ENCODE measurements at regions of chr3 and their contacts with region 1.

Region 1: DNA sequence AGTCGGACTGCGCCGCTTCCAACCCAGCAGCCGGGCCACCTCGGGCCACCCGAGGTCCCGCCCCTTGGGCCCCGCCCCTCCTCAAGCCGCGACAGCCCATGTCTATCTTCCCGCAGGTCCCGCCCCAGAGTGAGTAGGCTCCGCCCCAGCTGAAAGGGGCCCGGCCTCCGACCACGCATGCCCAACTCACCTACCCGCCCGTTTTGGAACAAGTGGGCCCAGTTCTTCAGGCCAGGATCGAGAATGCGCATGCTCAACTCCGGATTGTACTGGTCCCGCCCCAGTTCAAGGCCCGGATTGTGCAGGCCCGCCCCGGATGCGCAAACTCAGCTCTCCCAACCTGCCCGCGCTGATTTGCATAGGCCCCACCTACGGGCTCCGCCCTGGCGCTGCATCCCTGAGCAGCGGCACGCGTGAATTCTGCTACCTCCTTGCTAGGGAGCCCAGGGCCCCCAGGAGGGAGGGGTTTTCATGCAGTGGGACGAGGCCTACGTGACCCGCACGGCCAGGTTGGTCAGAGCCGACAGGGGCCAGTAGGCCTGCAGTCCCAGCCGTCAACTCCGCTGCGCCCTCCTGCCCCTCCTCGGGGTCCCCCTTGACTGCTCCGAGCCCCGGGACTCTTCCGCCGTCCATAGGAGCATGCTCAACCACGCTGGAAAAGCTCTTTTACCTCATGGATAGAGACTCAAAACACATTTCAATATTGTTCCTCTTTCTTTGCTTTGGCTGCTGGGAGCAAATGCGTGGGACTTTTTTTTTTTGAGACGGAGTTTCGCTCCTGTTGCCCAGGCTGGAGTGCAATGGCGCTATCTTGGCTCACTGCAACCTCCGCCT is at the start of gene PFKFB4:
- DNase-seq: peak; percentile 100
- H3K4me3 Mint-ChIP-seq: peak within 1 kb of the TSS; percentile 91
- H3K27ac Mint-ChIP-seq: peak within 1 kb of the TSS; percentile 90
- H3K4me1 Mint-ChIP-seq: peaks cover 52% of the 10 kb centered on the region
- H3K27me3 Mint-ChIP-seq: no peaks in the 10 kb centered on the region
- total RNA-seq, gene PFKFB4: 11.7 and 15.5 TPM in 2 replicates

Region 2: DNA sequence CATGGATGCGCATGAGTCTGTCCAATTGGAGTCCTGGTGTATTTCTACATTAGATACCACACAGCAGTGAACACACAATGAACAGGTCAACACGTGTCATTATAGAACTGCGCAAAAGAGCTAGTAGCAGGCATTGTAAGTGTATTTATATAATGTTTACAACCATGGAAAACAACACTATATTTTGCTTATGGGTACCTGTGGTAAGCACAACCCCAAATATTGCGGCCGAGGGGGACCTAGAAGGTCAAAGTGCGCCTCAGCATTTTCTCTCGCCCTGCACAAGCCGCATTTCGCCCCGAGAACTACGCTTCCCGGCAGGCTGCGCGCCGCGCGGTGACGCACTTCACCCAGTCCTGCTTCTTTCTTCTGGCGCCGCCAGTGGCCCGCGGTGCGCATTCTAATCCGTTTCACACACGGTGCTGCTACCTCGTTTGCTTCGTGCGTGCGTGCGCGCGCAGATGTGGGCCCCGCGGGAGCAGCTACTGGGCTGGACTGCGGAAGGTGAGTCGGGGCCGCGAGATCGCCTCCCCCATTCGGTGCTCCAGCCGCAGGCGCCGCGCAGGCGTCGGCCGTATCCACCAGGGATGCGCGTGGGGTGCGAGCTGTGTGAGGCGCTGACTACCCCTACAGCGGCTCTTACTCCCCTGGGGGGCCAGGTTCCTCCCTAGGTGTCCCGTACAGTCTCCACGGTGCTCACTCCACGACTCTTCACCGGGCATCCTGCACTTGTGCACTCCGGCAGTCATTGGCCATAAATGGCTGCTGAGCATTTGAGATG is 316.1 kb before region 1 on chr3 and contains the start of gene ZNF589:
- intact Hi-C with region 1: loop called (anchors 1 kb)
- DNase-seq: peak; percentile 93
- H3K4me3 Mint-ChIP-seq: peak within 1 kb of the TSS; percentile 91
- H3K27ac Mint-ChIP-seq: peak within 1 kb of the TSS; percentile 95
- H3K4me1 Mint-ChIP-seq: peaks cover 19% of the 10 kb centered on the region
- H3K27me3 Mint-ChIP-seq: no peaks in the 10 kb centered on the region
- total RNA-seq, gene ZNF589: 33.0 and 34.2 TPM in 2 replicates

Region 3: GRCh38 chr3:48439820-48440589 is 117.0 kb before region 1 on chr3 and contains the starts of genes CCDC51 and TMA7:
- intact Hi-C with region 1: loop called (anchors 1 kb)
- DNase-seq: peak; percentile 98
- H3K4me3 Mint-ChIP-seq: peak within 1 kb of the TSS; percentile 98
- H3K27ac Mint-ChIP-seq: peak within 1 kb of the TSS; percentile 94
- H3K4me1 Mint-ChIP-seq: peaks cover 26% of the 10 kb centered on the region
- H3K27me3 Mint-ChIP-seq: no peaks in the 10 kb centered on the region
- total RNA-seq, gene CCDC51: 26.0 and 26.3 TPM in 2 replicates
- total RNA-seq, gene TMA7: 262 and 266 TPM in 2 replicates

Region 4: DNA sequence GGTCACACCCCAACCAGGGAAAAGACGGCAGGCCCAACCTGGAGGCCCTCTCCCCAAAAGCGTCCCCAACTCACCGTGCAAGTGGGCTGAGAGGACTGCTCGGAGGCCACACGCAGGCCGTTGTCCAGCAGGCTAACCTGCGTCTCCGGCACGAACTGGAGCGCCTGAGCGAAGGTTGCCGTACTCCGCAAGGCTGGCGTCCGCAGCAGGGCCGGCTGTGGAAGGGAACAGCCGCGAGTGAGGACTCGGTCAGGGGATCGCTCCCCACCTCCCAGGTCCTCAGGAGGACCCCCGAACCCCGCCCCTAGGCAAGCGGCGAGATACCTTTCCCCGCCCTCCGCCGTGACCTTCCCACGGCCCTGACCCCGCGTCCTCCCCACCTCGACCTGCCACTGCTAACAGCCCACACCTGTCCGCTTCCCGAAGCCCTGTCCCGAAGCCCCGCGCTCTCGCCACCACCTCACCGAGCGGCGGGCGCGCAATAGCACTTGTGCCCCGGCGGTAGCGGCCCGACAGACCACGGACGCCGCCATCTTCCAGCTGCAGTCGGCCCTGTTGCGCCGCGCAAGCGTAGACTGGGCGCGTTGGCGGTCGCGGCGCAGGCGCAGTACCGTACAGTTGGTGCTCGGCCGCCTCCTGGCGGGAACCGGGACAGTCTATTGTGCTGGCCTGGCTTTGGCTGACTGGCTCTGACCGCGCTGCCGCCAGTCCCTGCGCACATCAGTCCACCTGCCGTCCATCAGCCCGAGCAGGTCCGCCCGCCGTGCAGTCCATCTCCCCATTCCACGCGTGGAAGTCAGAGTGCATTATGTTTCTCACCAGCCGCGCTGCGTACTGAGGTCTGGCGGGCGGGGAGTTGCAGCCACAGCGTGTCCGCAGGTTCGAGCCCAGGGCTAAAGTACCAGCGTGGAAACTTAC is 52.3 kb after region 1 on chr3 and contains the start of gene UQCRC1:
- intact Hi-C with region 1: loop called (anchors 1 kb)
- DNase-seq: peak; percentile 92
- H3K4me3 Mint-ChIP-seq: peak within 1 kb of the TSS; percentile 100
- H3K27ac Mint-ChIP-seq: peak within 1 kb of the TSS; percentile 97
- H3K4me1 Mint-ChIP-seq: peaks cover 22% of the 10 kb centered on the region
- H3K27me3 Mint-ChIP-seq: peaks cover 2% of the 10 kb centered on the region
- total RNA-seq, gene UQCRC1: 191 and 193 TPM in 2 replicates

Region 5: DNA sequence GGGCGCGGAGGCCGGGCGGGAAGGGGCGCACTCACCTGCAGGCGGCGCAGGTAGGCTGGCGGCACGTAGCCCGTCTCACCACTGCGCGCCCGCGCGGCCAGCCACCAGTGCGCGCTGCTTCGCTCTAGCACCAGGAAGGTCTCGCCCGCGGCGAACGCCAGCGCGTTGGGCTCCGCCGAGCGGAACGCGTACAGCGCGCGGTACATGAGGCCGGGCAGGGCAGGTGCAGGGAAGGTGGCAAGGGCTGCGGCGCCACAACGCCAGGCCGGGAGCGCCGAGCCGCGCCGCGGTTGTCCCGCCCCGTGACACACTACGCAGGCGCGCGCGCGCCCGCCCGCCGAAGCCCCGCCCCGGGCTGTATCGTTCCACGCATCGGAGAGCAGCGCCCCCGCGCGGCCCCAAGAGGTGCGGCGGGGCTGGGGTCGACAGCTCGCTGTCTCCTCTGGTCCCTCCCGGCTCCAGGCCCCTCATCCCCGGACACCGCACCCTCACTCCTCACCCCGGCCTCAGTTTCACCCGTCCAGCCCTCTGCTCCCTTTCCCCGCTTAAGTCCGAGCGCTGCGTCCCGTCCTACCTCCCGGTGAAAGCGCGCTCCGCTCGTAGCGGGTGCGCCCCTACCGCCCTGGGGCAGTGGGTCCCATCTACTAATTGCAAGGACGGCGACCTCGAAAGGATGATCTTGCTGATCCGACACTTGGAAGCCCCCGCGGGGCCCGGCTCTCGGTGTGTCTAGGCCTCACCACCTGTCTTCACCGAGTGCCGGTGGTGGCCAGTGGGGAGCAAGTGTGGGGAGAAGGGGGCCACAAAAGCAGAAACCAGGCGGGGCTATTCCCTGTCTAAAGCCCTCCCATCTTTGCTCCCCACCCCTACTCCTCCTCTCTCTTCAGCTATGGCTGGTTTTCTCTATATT is 128.8 kb after region 1 on chr3 and contains the start of gene NCKIPSD:
- intact Hi-C with region 1: loop called (anchors 1 kb)
- DNase-seq: peak; percentile 85
- H3K4me3 Mint-ChIP-seq: peak within 1 kb of the TSS; percentile 97
- H3K27ac Mint-ChIP-seq: peak within 1 kb of the TSS; percentile 95
- H3K4me1 Mint-ChIP-seq: peaks cover 38% of the 10 kb centered on the region
- H3K27me3 Mint-ChIP-seq: no peaks in the 10 kb centered on the region
- total RNA-seq, gene NCKIPSD: 40.8 and 45.5 TPM in 2 replicates

Region 6: DNA sequence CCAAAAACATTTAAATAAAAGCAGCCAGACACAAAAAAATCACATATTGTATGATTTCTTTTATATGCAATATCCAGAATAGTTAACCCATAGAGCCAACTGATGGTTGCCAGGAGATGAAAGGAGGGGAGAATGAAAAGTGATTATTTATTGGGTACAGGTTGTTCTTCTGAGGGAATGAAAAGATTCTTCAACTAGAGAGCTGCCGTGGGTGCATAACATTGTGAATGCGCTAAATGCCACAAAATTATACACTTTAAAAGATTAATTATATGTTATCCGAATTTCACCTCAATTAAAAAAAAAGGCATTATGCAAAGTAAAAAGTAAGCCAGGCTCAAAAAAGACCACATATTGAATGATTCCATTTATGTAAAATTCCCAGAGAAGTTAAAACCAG is 254.5 kb after region 1 on chr3:
- intact Hi-C with region 1: no loop called
- DNase-seq: no peak
- H3K4me3 Mint-ChIP-seq: no peak overlapping the region
- H3K27ac Mint-ChIP-seq: peak overlapping the region; percentile 69
- H3K4me1 Mint-ChIP-seq: peaks cover 28% of the 10 kb centered on the region
- H3K27me3 Mint-ChIP-seq: no peaks in the 10 kb centered on the region

Region 7: GRCh38 chr3:49021813-49022687 is 465.0 kb after region 1 on chr3 and contains the start of gene NDUFAF3:
- intact Hi-C with region 1: loop called (anchors 5 kb)
- DNase-seq: peak; percentile 91
- H3K4me3 Mint-ChIP-seq: peak within 1 kb of the TSS; percentile 91
- H3K27ac Mint-ChIP-seq: peak within 1 kb of the TSS; percentile 99
- H3K4me1 Mint-ChIP-seq: peaks cover 41% of the 10 kb centered on the region
- H3K27me3 Mint-ChIP-seq: no peaks in the 10 kb centered on the region
- total RNA-seq, gene NDUFAF3: 126 and 129 TPM in 2 replicates

Measured in activated T-helper 1 cell treated with anti-CD3 and anti-CD28 coated beads, Interleukin-12 subunit alpha, Interleukin-12 subunit beta, Interleukin-2, Interleukin-4 antibody, amounts not matched to agents 30 ng/mL and 10 ng/mL and 1 ng/mL, durations not matched to agents 14 hours and 24 hours and 36 hours (primary cell).